Activated T-helper 2 cell treated with anti-CD3 and anti-CD28 coated beads, Interferon-gamma antibody, Interleukin-2, Interleukin-4, amounts not matched to agents 10 μg/mL and 5 μg/mL and 100 μg/mL, durations not matched to agents 14 hours and 24 hours and 36 hours (primary cell): ENCODE measurements at regions of chr13 and their contacts with region 1.

Region 1: GRCh38 chr13:35157143-35157755 is 215.2 kb downstream of the NBEA start:
- DNase-seq: peak; percentile 10
- H3K4me3 Mint-ChIP-seq: no peak overlapping the region
- H3K27ac Mint-ChIP-seq: no peak overlapping the region
- H3K4me1 Mint-ChIP-seq: peaks cover 11% of the 10 kb centered on the region
- H3K27me3 Mint-ChIP-seq: no peaks in the 10 kb centered on the region

Region 2: DNA sequence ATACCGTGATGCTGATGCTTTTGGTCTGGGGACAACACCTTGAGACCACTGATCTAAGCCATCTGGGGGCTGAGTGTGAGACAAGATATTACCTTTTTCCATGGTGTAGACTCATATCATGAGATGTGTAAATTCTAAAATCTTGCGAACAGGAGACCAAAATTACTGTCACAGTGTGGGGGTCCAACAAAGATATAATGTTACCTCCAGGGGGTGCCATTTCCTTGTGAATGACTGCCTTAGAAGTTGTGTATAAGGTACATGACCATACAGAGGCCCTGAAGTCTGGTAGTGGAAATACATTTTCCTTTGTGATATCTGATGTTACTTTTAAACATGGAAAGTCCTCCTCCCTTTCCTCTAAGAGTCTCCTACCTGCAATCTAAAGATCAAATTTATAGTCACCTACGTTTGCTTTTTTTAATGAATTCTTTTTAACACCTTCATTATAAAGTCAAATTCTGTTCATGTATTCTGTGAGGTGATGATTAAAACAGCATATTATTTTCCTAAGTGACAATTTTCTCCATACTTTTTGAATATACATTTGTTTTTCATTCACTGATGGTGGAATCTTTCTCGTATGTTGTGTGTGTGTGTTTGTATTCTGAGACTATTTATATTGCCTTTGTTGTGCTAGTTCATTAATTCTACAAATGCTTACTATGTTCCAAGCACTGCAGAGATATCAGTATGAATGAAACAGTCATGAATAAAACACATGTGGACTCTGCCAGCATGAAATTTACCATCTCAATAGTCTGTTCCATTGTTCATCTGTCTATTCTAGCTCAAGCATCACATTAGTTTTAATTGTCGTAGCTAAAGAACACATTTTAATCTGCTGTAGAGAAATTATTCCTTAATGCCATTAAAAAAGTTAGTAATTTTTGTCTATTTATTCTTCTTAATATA is 1225.6 kb before region 1 on chr13:
- intact Hi-C with region 1: loop called (anchors 5 kb)
- DNase-seq: no peak
- H3K4me3 Mint-ChIP-seq: no peak overlapping the region
- H3K27ac Mint-ChIP-seq: no peak overlapping the region
- H3K4me1 Mint-ChIP-seq: no peaks in the 10 kb centered on the region
- H3K27me3 Mint-ChIP-seq: no peaks in the 10 kb centered on the region

Region 3: GRCh38 chr13:34833562-34834182 is 323.6 kb before region 1 on chr13:
- intact Hi-C with region 1: loop called (anchors 5 kb)
- DNase-seq: no peak
- H3K4me3 Mint-ChIP-seq: no peak overlapping the region
- H3K27ac Mint-ChIP-seq: no peak overlapping the region
- H3K4me1 Mint-ChIP-seq: no peaks in the 10 kb centered on the region
- H3K27me3 Mint-ChIP-seq: no peaks in the 10 kb centered on the region

Region 4: DNA sequence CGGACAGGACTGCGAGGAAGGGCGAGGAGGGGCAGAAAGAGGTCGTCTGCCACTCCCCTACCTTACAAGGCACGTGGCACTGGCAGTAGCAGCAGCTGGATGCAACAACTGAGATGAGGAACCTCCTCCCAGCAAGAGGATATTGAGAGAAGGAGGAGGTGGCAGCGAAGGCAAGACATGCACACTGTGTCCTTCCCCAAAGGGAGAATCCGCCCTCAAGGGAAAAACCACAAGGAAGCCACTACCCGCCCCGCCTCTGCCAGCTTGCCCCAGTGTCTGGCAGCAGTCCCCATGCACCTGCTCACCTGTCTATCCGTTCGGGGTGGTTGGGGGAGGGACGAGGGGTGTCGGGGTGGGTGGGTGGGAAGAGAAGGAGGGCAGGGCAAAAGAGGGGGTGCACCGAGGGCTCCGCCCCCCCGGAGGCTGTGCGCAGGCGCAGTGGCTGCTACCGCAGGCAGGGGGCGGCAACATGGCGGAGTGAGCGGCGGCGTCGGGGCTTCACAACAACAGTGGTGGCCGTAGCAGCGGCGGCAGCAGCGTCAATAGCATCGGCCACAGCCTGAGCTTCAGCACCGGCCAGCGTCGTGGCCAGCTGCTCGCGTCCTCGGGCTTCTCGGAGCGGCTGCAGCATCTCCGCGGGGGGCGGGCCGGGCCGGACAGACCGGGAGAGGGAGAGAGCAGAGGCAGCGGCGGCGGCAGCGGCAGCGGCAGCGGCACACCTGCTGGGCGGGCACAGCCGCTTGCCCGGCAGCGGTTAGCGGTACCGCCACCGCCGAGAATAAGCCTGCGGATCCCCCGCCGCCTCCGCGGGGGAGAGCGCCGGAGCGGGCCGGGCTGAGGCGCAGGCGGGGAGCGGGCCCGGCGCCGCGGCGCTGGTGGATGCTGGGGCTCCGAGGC is 215.2 kb before region 1 on chr13 and contains the start of gene NBEA:
- intact Hi-C with region 1: loop called (anchors 5 kb)
- DNase-seq: peak; percentile 68
- H3K4me3 Mint-ChIP-seq: peak within 1 kb of the TSS; percentile 85
- H3K27ac Mint-ChIP-seq: no peak within 1 kb of the TSS
- H3K4me1 Mint-ChIP-seq: peaks cover 16% of the 10 kb centered on the region
- H3K27me3 Mint-ChIP-seq: peaks cover 52% of the 10 kb centered on the region
- total RNA-seq, gene NBEA: 0.14 and 0.23 TPM in 2 replicates

Region 5: GRCh38 chr13:35332134-35332533 is 174.9 kb after region 1 on chr13:
- intact Hi-C with region 1: no loop called
- DNase-seq: no peak
- H3K4me3 Mint-ChIP-seq: no peak overlapping the region
- H3K27ac Mint-ChIP-seq: no peak overlapping the region
- H3K4me1 Mint-ChIP-seq: no peaks in the 10 kb centered on the region
- H3K27me3 Mint-ChIP-seq: no peaks in the 10 kb centered on the region